Aorta (tissue), 5 donors: ENCODE measurements at regions of chr19 and their contacts with region 1.

Region 1: GRCh38 chr19:53431399-53432087 is at the start of gene ZNF761:
- DNase-seq: peak; percentile 96 to 99
- ATAC-seq: peak; percentile 100
- H3K4me3 ChIP-seq: peak within 1 kb of the TSS; percentile 57 to 78
- H3K27ac ChIP-seq: peak within 1 kb of the TSS in 1 of 2 donors; percentile 31
- H3K4me1 ChIP-seq: no peaks in the 10 kb centered on the region
- H3K27me3 ChIP-seq: no peaks in the 10 kb centered on the region
- total RNA-seq, gene ZNF761: 9.5 to 10.2 TPM

Region 2: DNA sequence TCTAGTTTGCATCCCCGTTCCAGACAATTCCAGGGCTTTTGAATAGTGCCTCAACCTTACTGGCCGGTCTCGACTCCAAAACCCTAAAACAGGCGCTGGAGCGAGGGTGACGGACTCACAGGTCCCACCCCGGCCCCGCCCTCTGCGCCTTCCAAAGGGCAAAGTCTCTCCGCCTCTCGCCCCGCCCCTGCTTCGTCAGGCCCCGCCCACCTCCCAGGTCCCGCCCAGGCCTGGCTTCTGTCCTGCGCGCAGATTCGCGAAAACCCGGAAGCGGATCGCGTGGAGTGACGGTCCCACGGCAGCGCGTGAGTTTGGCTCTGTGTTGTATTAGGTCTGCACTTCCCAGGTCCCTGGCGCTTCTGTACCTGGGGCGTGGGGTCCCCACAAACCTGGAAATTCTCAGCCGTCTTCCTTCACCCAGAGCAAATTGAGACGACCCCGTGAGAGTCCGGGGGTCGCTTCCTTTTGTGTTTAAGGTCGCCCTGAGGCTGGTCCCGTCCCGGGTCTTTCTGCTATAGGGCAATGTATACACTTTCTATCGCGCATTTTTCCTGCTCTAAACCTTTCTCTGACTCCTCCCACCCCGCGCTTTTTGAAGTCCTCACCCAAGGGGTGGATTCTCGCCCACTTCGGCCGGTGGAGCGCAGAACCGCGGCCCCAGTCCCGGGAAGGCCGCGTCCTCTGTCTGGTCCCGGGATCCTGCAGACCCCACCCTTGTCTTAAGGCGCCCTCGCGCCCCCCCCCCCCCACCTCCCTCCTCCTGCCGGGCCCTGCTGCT is 36.1 kb after region 1 on chr19 and contains the start of gene ZNF813:
- intact Hi-C with region 1: loop called in 1 of 2 experiments (anchors 5 kb)
- DNase-seq: peak; percentile 98 to 99
- ATAC-seq: peak; percentile 99
- H3K4me3 ChIP-seq: peak within 1 kb of the TSS; percentile 77 to 82
- H3K27ac ChIP-seq: peak within 1 kb of the TSS in 1 of 2 donors; percentile 18
- H3K4me1 ChIP-seq: no peaks in the 10 kb centered on the region
- H3K27me3 ChIP-seq: no peaks in the 10 kb centered on the region
- total RNA-seq, gene ZNF813: 3.0 to 4.0 TPM